ENCODE measurements at regions of chr4 and their contacts with region 1.

Region 1: GRCh38 chr4:121736735-121737351 is 28.1 kb downstream of the SMIM43 start:
- DNase-seq: peak; percentile 31 to 64
- H3K4me3 ChIP-seq: no peak overlapping the region
- H3K27ac ChIP-seq: no peak overlapping the region
- H3K4me1 ChIP-seq: no peaks in the 10 kb centered on the region
- H3K27me3 ChIP-seq: no peaks in the 10 kb centered on the region
- CTCF ChIP-seq: peak; percentile 90

Region 2: GRCh38 chr4:121370729-121371325 is 366.0 kb before region 1 on chr4:
- CTCF ChIA-PET with region 1: interaction called, 4 read pairs
- POLR2A ChIA-PET with region 1: no interaction called
- intact Hi-C with region 1: loop called (anchors 2 kb)
- DNase-seq: peak in 1 of 2 experiments; percentile 33
- H3K4me3 ChIP-seq: no peak overlapping the region
- H3K27ac ChIP-seq: no peak overlapping the region
- H3K4me1 ChIP-seq: peaks cover 8% of the 10 kb centered on the region; the same call in 1 of the 2 replicates
- H3K27me3 ChIP-seq: no peaks in the 10 kb centered on the region
- CTCF ChIP-seq: peak; percentile 83

Region 3: DNA sequence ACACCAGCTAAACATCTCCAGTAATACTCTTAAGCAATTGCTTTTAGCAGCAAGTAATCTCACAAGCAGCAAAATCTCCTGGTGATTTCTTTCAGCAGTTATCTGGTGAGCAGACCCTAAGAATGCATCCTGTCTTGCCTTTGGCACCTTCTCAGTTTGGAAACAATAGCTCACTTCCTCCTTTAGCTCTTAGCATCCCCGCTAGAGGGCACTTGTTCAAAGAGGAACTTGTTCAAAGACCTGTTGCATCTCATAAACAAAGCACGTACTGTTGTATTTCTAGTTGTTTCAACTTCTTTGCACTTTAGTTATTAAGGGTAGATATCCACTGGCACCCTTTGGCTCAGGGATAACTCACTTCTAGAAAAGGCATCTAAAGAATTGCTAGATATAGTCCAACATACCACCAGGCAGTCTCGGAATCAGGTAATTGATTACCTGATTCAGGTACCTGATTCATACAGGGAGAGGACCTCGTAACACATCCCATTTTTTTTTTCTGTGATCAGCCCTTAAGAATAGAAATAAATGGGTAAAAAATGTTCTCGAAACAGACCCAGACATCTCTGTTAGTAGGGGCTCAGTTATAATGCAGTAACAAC is 274.1 kb before region 1 on chr4:
- CTCF ChIA-PET with region 1: interaction called, 3 read pairs
- POLR2A ChIA-PET with region 1: no interaction called
- intact Hi-C with region 1: loop called (anchors 2 kb)
- DNase-seq: peak; percentile 25 to 41
- H3K4me3 ChIP-seq: no peak overlapping the region
- H3K27ac ChIP-seq: no peak overlapping the region
- H3K4me1 ChIP-seq: no peaks in the 10 kb centered on the region
- H3K27me3 ChIP-seq: no peaks in the 10 kb centered on the region
- CTCF ChIP-seq: peak; percentile 76

Region 4: DNA sequence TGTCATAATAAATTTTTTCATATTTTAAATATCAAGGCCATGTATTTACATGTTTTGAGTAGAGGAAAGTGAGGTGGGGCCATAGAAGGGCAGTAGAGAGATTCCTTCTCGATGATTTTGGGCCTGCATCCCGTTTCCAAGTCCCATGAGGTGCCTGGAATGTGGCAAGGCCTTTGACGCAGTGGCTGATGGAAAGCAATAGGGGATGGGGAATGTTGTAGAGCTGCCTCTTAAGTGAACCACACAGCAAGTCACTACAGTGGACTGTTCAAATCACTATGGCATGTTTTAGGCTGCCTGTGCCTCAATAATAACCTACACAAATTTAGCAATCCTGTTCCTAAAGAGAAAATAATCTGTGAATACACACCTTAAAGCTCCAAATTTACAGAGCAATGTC is 88.3 kb before region 1 on chr4:
- CTCF ChIA-PET with region 1: no interaction called
- POLR2A ChIA-PET with region 1: no interaction called
- intact Hi-C with region 1: no loop called
- DNase-seq: no peak
- H3K4me3 ChIP-seq: no peak overlapping the region
- H3K27ac ChIP-seq: no peak overlapping the region
- H3K4me1 ChIP-seq: no peaks in the 10 kb centered on the region
- H3K27me3 ChIP-seq: no peaks in the 10 kb centered on the region
- CTCF ChIP-seq: no peak

Region 5: DNA sequence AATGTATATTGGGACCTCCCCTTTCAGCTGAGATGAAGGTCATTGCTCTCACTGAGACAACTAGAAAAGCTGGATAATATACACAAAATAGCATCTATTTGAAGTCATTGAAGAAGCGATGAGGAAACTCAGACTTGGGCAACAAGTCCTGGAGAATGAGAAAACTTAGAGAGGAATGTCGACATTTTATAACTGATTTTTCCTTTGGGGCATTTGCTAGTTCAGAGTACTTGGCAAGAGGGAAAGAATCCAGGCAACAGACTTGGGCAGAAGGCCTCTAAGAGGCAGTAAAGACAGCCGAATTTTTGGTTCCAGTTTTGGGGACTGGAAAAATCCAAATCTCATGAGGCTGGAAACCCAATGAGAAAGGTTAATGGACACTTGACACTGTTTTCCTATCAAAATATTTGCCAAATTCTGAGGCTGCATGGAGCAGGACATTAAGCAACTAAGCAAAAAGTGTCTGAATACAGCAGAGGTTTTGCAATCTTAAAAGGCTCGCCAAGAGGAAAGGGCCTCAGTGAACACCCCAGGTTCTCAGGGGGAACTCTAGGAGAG is 19.1 kb before region 1 on chr4:
- CTCF ChIA-PET with region 1: no interaction called
- POLR2A ChIA-PET with region 1: no interaction called
- intact Hi-C with region 1: no loop called
- DNase-seq: peak in 1 of 2 experiments; percentile 33
- H3K4me3 ChIP-seq: no peak overlapping the region
- H3K27ac ChIP-seq: no peak overlapping the region
- H3K4me1 ChIP-seq: no peaks in the 10 kb centered on the region
- H3K27me3 ChIP-seq: no peaks in the 10 kb centered on the region
- CTCF ChIP-seq: no peak

Region 6: GRCh38 chr4:121823505-121824170 is 86.8 kb after region 1 on chr4 and contains the start of gene CCNA2:
- CTCF ChIA-PET with region 1: interaction called, 17 read pairs
- POLR2A ChIA-PET with region 1: interaction called, 5 read pairs
- intact Hi-C with region 1: no loop called
- DNase-seq: peak; percentile 92 to 93
- H3K4me3 ChIP-seq: peak within 1 kb of the TSS; percentile 85
- H3K27ac ChIP-seq: peak within 1 kb of the TSS; percentile 25; the same call in 1 of the 2 replicates
- H3K4me1 ChIP-seq: peaks cover 27% of the 10 kb centered on the region
- H3K27me3 ChIP-seq: no peaks in the 10 kb centered on the region
- CTCF ChIP-seq: no peak
- total RNA-seq, gene CCNA2: 61.9 and 70.7 TPM in 2 replicates